Cardiac septum (tissue), 1 donor: ENCODE measurements at regions of chr6 and their contacts with region 1.

Region 1: GRCh38 chr6:50602292-50602691 is 111.0 kb upstream of the TFAP2D start:
- DNase-seq: no peak

Region 2: GRCh38 chr6:50128420-50129005 is 473.8 kb before region 1 on chr6:
- intact Hi-C with region 1: loop called (anchors 5 kb)
- DNase-seq: no peak

Region 3: DNA sequence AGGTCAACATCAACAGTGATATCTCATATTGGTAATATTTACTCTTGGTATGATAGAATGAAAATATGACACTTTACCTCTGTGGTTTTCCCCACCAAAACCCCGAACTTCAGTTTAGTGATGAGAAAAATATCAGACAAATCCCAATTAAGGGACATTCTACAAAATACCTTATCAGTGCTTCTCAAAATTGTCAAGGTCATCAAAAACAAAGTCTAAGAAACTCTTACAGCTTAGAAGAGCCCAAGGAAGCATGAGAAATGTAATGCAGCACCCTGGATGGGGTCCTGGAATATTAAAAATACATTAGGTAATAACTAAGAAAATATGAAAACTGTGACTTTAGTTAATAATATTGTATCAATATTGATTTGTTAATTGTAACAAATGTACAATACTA is 37.3 kb before region 1 on chr6:
- intact Hi-C with region 1: no loop called
- DNase-seq: no peak